Naive thymus-derived CD8-positive, alpha-beta T cell (primary cell): ENCODE measurements at regions of chr17 and their contacts with region 1.

Region 1: GRCh38 chr17:44186307-44187130 is at the start of gene TMUB2:
- DNase-seq: peak; percentile 98 to 100 (median 99)
- ATAC-seq: peak; percentile 88 to 90
- H3K4me3 Mint-ChIP-seq: peak within 1 kb of the TSS; percentile 95 to 100 (median 99)
- H3K27ac Mint-ChIP-seq: peak within 1 kb of the TSS; percentile 98 to 100 (median 100)
- H3K4me1 Mint-ChIP-seq: peaks cover 23 to 58% (median 49%) of the 10 kb centered on the region in 4 donors
- H3K27me3 Mint-ChIP-seq: no peaks in the 10 kb centered on the region
- polyA plus RNA-seq, gene TMUB2: 22.1 to 30.2 (median 25.5) TPM

Region 2: DNA sequence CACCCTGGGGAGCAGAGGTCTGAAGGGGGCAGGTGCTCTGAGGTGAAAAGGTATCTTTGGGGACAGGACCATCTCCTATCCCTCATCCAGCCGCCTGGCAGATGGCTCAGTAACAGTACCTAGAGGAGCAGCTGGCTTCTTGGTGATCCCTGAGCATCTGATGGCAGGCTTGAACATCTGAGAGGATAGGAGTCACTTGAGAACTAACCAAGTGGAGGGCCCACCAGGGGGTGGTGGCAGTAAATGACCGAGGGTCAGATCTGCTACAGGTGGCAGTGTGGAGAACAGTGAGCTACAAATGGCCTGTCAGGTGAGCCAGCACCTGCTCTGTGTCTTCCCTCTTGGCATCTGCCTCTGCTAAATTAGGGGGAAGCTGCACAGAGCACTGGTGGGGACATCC is 31.0 kb before region 1 on chr17:
- POLR2A ChIA-PET with region 1: no interaction called
- DNase-seq: no peak
- ATAC-seq: no peak
- H3K4me3 Mint-ChIP-seq: no peak overlapping the region
- H3K27ac Mint-ChIP-seq: no peak overlapping the region
- H3K4me1 Mint-ChIP-seq: no peaks in the 10 kb centered on the region
- H3K27me3 Mint-ChIP-seq: peaks cover 0 to 2% (median 0%) of the 10 kb centered on the region in 5 donors

Region 3: GRCh38 chr17:44171931-44172455 is 14.5 kb before region 1 on chr17:
- POLR2A ChIA-PET with region 1: interaction called, 10 read pairs
- DNase-seq: no peak
- ATAC-seq: no peak
- H3K4me3 Mint-ChIP-seq: peak overlapping the region in 1 of 10 donors; percentile 8
- H3K27ac Mint-ChIP-seq: peak overlapping the region in 5 of 10 donors; percentile 15 to 76 (median 37)
- H3K4me1 Mint-ChIP-seq: peaks cover 10 to 16% (median 11%) of the 10 kb centered on the region in 4 donors
- H3K27me3 Mint-ChIP-seq: no peaks in the 10 kb centered on the region

Region 4: GRCh38 chr17:44199553-44200477 is 13.3 kb after region 1 on chr17 and contains the start of gene ATXN7L3:
- POLR2A ChIA-PET with region 1: interaction called, 111 read pairs
- DNase-seq: peak; percentile 91 to 100 (median 98)
- ATAC-seq: peak; percentile 77 to 81
- H3K4me3 Mint-ChIP-seq: peak within 1 kb of the TSS; percentile 85 to 96 (median 90)
- H3K27ac Mint-ChIP-seq: peak within 1 kb of the TSS; percentile 86 to 99 (median 95)
- H3K4me1 Mint-ChIP-seq: peaks cover 39 to 59% (median 48%) of the 10 kb centered on the region in 4 donors
- H3K27me3 Mint-ChIP-seq: no peaks in the 10 kb centered on the region
- polyA plus RNA-seq, gene ATXN7L3: 9.3 to 14.2 (median 10.6) TPM

Region 5: DNA sequence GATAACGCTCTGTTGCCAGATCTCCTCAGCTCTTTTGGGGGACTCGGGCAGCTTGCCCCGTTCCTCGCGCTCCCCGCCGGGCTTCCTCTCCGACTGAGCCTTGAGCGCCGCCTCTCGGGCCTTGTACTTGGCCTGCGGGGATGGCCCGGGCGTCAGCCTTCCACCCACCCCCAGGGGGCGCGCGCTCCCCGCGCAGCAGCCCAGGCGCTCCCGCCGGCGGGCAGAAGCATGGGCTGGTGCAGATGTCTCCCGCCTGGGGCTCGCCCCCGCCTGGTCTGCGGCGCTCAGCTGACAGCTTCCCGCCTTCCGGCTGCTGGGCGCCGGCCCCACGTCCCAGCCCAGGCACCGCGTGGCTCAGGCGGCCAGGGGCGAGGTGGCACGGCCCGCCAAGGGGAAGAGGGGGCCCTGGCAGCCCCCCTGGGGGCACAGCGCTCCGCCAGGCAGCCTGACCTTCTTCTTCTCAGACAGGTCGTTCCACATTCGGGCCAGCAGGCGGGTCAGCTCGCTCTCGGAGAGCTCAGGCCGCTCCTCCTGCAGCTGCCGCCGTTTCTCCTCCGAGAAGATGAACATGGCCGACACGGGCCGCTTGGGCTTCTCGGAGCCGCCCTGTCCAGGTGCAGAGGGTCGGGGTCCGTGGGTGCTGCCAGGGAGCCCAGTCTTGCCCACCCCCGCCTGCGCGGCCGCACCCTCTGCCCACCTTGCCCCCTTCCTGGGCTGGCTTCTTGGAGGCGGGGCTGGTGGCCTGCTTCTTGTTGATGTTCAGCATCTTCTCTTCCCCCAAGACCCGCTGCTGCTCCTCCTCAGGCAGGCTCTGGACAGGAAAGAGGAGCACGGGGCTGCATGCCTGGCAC is 24.0 kb after region 1 on chr17:
- POLR2A ChIA-PET with region 1: interaction called, 101 read pairs
- DNase-seq: peak; percentile 86 to 98 (median 93)
- ATAC-seq: peak; percentile 95 to 96
- H3K4me3 Mint-ChIP-seq: peak overlapping the region in 9 of 10 donors; percentile 15 to 79 (median 55)
- H3K27ac Mint-ChIP-seq: peak overlapping the region; percentile 63 to 93 (median 86)
- H3K4me1 Mint-ChIP-seq: peaks cover 35 to 77% (median 64%) of the 10 kb centered on the region in 4 donors
- H3K27me3 Mint-ChIP-seq: no peaks in the 10 kb centered on the region

Region 6: GRCh38 chr17:44235583-44235936 is 49.0 kb after region 1 on chr17:
- POLR2A ChIA-PET with region 1: no interaction called
- DNase-seq: no peak
- ATAC-seq: no peak
- H3K4me3 Mint-ChIP-seq: no peak overlapping the region
- H3K27ac Mint-ChIP-seq: peak overlapping the region in 2 of 10 donors; percentile 19 to 54
- H3K4me1 Mint-ChIP-seq: peaks cover 7 to 9% (median 8%) of the 10 kb centered on the region in 4 donors
- H3K27me3 Mint-ChIP-seq: peaks cover 0 to 4% (median 0%) of the 10 kb centered on the region in 5 donors

Region 7: GRCh38 chr17:44324571-44325275 is 138.2 kb after region 1 on chr17 and contains the start of gene SLC25A39:
- POLR2A ChIA-PET with region 1: interaction called, 16 read pairs
- DNase-seq: peak; percentile 88 to 98 (median 95)
- ATAC-seq: peak; percentile 70 to 75
- H3K4me3 Mint-ChIP-seq: peak within 1 kb of the TSS; percentile 88 to 95 (median 92)
- H3K27ac Mint-ChIP-seq: peak within 1 kb of the TSS; percentile 90 to 98 (median 96)
- H3K4me1 Mint-ChIP-seq: peaks cover 6 to 42% (median 16%) of the 10 kb centered on the region in 4 donors
- H3K27me3 Mint-ChIP-seq: no peaks in the 10 kb centered on the region
- polyA plus RNA-seq, gene SLC25A39: 133 to 176 (median 162) TPM